GM10248 (cell line): ENCODE measurements at regions of chr6 and their contacts with region 1.

Region 1: DNA sequence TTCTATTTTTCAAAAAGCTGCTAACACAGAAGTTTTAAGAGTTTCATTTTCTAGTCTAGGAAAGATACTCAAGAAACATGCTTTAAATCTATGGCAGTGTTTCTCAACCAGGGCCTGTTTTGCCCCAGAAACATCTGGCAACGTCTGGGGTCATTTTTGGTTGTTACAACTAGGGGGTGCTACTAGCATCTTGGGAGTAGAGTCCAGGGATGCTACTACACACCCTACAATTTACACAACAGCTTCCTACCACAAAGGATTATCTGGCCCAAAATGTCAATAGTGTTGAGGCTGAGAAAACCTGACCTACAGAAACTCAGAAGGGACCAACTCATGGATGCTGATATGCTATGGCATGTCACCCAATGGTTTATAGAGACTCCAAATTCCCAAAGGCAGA is 24.4 kb downstream of the SERAC1 start:
- DNase-seq: peak; percentile 32
- CTCF ChIP-seq: no peak

Region 2: GRCh38 chr6:158131926-158132325 is 11.8 kb before region 1 on chr6:
- CTCF ChIA-PET with region 1: interaction called, 14 read pairs
- POLR2A ChIA-PET with region 1: no interaction called
- DNase-seq: peak; percentile 17
- CTCF ChIP-seq: peak; percentile 30